ENCODE measurements at regions of chr2 and their contacts with region 1.

Region 1: DNA sequence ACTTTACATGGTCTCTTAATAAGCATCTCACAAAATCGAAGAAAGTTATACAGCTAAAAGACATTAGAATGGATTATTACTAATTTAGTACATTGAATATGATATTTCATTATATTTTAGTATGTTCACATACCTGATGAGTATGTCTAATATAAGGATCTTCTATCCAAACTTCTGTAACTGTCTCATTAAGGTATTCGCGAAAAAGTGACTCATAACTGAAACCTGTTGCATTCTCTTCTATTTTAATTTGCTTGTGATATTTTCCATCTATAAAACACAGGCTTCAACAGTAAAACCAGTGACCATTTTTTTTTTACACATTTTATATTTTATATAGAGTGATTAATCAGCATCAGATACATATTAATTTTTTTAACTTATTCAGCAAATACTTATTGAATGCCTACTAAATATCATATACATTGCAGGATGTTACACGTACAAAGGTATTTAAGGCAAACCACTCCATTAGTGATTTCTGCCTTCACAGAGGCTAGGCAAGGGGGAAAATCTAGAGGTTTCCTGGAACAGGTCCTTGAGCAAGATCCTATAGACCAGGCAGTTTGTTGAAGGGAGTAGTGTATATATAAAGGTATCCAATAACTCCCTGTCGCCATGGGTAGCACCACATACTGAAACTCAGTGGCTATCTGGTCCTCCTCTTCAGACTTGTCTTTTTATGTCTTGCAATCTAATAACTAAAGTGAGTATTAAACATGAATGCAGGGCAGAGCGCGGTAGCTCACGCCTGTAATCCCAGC is 9.3 kb downstream of the MITD1 start:
- DNase-seq: no peak
- H3K4me3 Mint-ChIP-seq: no peak overlapping the region
- H3K27ac Mint-ChIP-seq: peak overlapping the region; percentile 80
- H3K4me1 Mint-ChIP-seq: peaks cover 40% of the 10 kb centered on the region
- H3K27me3 Mint-ChIP-seq: no peaks in the 10 kb centered on the region

Region 2: DNA sequence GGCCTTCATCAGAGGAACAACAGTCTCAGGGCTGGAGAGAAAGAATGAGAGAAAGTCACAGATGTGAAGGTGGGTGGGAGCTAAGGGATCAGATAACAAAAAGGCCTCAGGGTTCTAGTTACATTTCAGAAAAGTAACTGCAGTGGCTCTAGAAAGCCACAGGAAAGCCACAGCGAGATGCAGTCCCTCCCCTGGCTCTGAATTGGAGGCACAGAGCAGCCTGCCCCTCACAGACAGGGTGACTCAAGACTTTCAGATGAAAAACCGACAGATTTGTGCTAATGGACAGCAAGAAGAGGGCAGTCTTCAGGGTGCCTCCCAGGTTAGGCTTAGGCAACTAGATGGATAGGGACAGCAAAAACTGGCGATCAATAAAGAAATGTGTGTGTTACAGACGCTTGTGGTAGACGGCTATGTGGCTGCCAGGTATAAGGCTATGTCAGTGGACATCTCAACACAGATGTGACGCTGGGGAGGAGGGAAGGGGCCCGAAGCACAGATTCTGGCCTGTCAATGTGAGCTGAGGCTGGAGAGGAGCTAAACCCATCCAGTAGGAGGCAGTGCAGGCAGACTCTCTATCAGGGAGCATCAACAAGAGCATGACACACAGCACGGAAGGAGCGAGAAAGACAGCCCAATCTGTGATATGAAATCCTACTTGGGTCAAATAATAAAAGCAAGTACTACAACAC is 537.0 kb before region 1 on chr2:
- CTCF ChIA-PET with region 1: no interaction called
- intact Hi-C with region 1: loop called (anchors 10 kb)
- DNase-seq: peak; percentile 76
- H3K4me3 Mint-ChIP-seq: no peak overlapping the region
- H3K27ac Mint-ChIP-seq: peak overlapping the region; percentile 85
- H3K4me1 Mint-ChIP-seq: peaks cover 32% of the 10 kb centered on the region
- H3K27me3 Mint-ChIP-seq: no peaks in the 10 kb centered on the region

Region 3: GRCh38 chr2:98795891-98796676 is 375.5 kb before region 1 on chr2:
- CTCF ChIA-PET with region 1: no interaction called
- intact Hi-C with region 1: no loop called
- DNase-seq: no peak
- H3K4me3 Mint-ChIP-seq: no peak overlapping the region
- H3K27ac Mint-ChIP-seq: no peak overlapping the region
- H3K4me1 Mint-ChIP-seq: no peaks in the 10 kb centered on the region
- H3K27me3 Mint-ChIP-seq: no peaks in the 10 kb centered on the region

Region 4: GRCh38 chr2:98923244-98923940 is 248.2 kb before region 1 on chr2:
- CTCF ChIA-PET with region 1: no interaction called
- intact Hi-C with region 1: no loop called
- DNase-seq: no peak
- H3K4me3 Mint-ChIP-seq: no peak overlapping the region
- H3K27ac Mint-ChIP-seq: no peak overlapping the region
- H3K4me1 Mint-ChIP-seq: no peaks in the 10 kb centered on the region
- H3K27me3 Mint-ChIP-seq: no peaks in the 10 kb centered on the region